ENCODE measurements at regions of chr7 and their contacts with region 1.

Region 1: GRCh38 chr7:108525985-108526767 is at the start of gene PNPLA8:
- DNase-seq: peak; percentile 97
- CTCF ChIP-seq: no peak

Region 2: GRCh38 chr7:108376206-108376605 is 150.0 kb before region 1 on chr7:
- CTCF ChIA-PET with region 1: no interaction called
- POLR2A ChIA-PET with region 1: no interaction called
- DNase-seq: no peak
- CTCF ChIP-seq: no peak

Region 3: DNA sequence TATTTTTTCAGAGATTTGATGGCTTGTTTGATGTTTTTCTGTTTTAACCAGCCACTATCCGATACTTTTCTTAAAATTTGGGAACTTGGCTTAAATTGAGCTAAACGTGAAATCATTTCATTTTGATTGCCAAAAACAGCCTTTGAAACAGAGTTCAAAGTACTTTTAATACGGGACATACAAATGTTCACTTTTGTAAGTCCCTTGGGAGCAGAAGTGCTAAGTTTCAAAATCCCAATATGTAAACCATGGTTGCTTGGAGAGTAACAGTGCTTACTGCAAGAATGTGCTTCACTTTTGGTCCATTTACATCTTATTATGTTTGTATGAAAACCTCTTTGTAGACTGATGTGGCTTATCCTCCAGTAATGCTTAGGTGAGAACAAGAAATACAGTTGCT is 11.2 kb before region 1 on chr7:
- CTCF ChIA-PET with region 1: interaction called, 12 read pairs
- POLR2A ChIA-PET with region 1: interaction called, 3 read pairs
- DNase-seq: no peak
- CTCF ChIP-seq: no peak

Region 4: GRCh38 chr7:108537229-108537628 is 11.1 kb after region 1 on chr7:
- CTCF ChIA-PET with region 1: no interaction called
- POLR2A ChIA-PET with region 1: no interaction called
- DNase-seq: no peak
- CTCF ChIP-seq: no peak

Region 5: GRCh38 chr7:108569381-108570145 is 43.4 kb after region 1 on chr7 and contains the starts of genes DNAJB9 and THAP5:
- CTCF ChIA-PET with region 1: no interaction called
- POLR2A ChIA-PET with region 1: interaction called, 16 read pairs
- DNase-seq: peak; percentile 97
- CTCF ChIP-seq: no peak